Activated CD8-positive, alpha-beta memory T cell treated with anti-CD3 and anti-CD28 coated beads, Interleukin-2, amount 10 ng/mL, durations not matched to agents 7 days and 5 days (primary cell): ENCODE measurements at regions of chr10 and their contacts with region 1.

Region 1: GRCh38 chr10:71651928-71652327 is 67.7 kb downstream of the C10orf105 start:
- DNase-seq: no peak
- ATAC-seq: no peak
- H3K4me3 Mint-ChIP-seq: no peak overlapping the region
- H3K27ac Mint-ChIP-seq: no peak overlapping the region
- H3K4me1 Mint-ChIP-seq: no peaks in the 10 kb centered on the region
- H3K27me3 Mint-ChIP-seq: no peaks in the 10 kb centered on the region

Region 2: DNA sequence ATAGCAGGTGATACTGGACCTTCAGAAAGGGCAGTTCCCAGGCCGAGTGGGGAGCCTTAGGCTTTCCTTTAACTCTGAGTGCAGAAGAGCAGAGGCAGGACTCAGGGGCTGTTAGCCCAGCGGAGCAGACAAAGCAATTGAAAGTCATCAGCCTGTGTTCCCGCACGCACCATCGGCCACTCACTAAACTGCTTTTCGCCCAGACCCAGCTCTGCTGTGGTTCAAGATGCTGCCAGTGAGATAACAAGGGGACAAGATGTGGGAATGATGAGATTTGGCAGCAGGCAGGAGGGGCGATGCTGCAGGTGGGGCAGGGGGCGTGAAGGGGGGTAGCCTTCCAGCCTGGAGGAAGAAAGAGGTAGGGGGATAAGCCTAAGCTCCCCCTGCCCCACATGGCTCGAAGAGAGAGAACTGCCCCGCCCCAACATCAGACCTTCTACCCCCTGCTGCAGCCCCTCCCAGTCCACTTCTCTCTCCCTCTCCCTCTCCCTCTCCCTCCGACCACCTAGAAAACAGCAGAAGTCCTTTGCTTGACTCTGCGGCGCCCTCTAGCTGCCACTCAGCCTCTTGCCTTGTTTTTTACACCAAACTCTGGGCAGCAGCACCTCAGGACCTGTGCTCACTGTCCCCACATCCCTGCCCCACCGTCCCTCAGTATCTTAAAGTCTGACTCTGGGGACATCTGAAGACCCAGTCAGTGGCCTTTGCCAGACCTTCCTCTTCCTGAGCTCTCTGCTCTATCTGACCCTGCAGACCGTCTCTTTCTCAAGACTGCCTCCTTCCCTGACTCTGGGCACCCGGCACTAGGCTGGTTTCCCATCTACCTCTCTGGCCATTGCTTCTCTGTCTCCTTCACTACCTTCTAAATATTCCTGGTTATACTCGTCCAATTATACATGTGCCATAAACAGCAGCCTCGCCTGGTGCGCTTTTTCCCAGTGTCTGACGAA is 42.8 kb before region 1 on chr10:
- CTCF ChIA-PET with region 1: interaction called, 11 read pairs
- DNase-seq: peak; percentile 74
- ATAC-seq: peak; percentile 63
- H3K4me3 Mint-ChIP-seq: no peak overlapping the region
- H3K27ac Mint-ChIP-seq: no peak overlapping the region
- H3K4me1 Mint-ChIP-seq: no peaks in the 10 kb centered on the region
- H3K27me3 Mint-ChIP-seq: peaks cover 7% of the 10 kb centered on the region